Calu3 (cell line): ENCODE measurements at regions of chr3 and their contacts with region 1.

Region 1: GRCh38 chr3:8622873-8623691 is 21.5 kb downstream of the SSUH2 start:
- DNase-seq: peak; percentile 77
- H3K4me3 Mint-ChIP-seq: no peak overlapping the region
- H3K27ac Mint-ChIP-seq: no peak overlapping the region
- H3K4me1 Mint-ChIP-seq: peaks cover 25% of the 10 kb centered on the region
- H3K27me3 Mint-ChIP-seq: no peaks in the 10 kb centered on the region
- CTCF ChIP-seq: peak; percentile 85

Region 2: GRCh38 chr3:8324740-8325139 is 298.3 kb before region 1 on chr3:
- CTCF ChIA-PET with region 1: no interaction called
- intact Hi-C with region 1: loop called (anchors 2 kb)
- DNase-seq: peak; percentile 62
- H3K4me3 Mint-ChIP-seq: no peak overlapping the region
- H3K27ac Mint-ChIP-seq: no peak overlapping the region
- H3K4me1 Mint-ChIP-seq: no peaks in the 10 kb centered on the region
- H3K27me3 Mint-ChIP-seq: no peaks in the 10 kb centered on the region
- CTCF ChIP-seq: no peak

Region 3: GRCh38 chr3:8441969-8442559 is 181.0 kb before region 1 on chr3:
- CTCF ChIA-PET with region 1: interaction called, 5 read pairs
- intact Hi-C with region 1: loop called (anchors 1 kb)
- DNase-seq: peak; percentile 28
- H3K4me3 Mint-ChIP-seq: no peak overlapping the region
- H3K27ac Mint-ChIP-seq: no peak overlapping the region
- H3K4me1 Mint-ChIP-seq: peaks cover 24% of the 10 kb centered on the region
- H3K27me3 Mint-ChIP-seq: no peaks in the 10 kb centered on the region
- CTCF ChIP-seq: peak; percentile 44